ENCODE measurements at regions of chr15 and their contacts with region 1.

Region 1: GRCh38 chr15:45884755-45885445 is 250.1 kb downstream of the SQOR start:
- DNase-seq: no peak
- H3K4me3 ChIP-seq: no peak overlapping the region
- H3K27ac ChIP-seq: no peak overlapping the region
- H3K4me1 ChIP-seq: no peaks in the 10 kb centered on the region
- H3K27me3 ChIP-seq: no peaks in the 10 kb centered on the region
- CTCF ChIP-seq: no peak

Region 2: DNA sequence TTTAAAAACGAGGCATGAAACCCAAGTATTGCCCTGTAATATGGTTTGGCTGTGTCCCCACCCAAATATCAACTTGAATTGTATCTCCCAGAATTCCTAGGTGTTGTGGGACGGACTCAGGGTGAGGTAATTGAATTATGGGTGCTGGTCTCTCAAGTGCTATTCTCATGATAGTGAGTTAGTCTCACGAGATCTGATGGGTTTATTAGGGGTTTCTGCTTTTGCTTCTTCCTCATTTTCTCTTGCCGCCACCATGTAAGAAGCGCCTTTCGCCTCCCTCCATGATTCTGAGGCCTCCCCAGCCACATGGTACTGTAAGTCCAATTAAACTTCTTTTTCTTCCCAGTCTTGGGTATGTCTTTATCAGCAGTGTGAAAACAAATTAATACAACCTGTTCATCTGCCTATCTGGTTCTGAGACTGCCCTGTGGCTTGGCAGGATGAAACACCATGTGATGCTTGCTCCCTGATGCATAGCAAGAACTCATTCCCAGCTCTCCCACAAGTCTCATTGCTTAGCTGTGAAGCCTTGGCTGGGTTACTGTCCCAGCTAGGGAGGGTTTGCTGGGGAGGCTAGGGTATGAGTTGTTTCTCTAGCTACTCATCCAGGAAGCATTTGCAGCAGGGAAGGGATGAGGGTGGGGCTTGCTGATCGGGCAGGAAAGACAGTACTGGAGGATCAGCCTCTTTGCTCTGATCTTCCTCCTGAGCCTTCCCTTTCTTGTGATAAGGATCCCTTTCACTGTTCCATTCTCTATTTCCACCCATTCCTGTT is 253.8 kb before region 1 on chr15:
- CTCF ChIA-PET with region 1: no interaction called
- dilution Hi-C with region 1: no loop called
- in situ Hi-C with region 1: no loop called
- intact Hi-C with region 1: no loop called
- DNase-seq: peak; percentile 90
- H3K4me3 ChIP-seq: peak overlapping the region in 2 of 3 experiments; percentile 13 to 28
- H3K27ac ChIP-seq: peak overlapping the region; percentile 80
- H3K4me1 ChIP-seq: peaks cover 18% of the 10 kb centered on the region
- H3K27me3 ChIP-seq: no peaks in the 10 kb centered on the region
- CTCF ChIP-seq: no peak

Region 3: DNA sequence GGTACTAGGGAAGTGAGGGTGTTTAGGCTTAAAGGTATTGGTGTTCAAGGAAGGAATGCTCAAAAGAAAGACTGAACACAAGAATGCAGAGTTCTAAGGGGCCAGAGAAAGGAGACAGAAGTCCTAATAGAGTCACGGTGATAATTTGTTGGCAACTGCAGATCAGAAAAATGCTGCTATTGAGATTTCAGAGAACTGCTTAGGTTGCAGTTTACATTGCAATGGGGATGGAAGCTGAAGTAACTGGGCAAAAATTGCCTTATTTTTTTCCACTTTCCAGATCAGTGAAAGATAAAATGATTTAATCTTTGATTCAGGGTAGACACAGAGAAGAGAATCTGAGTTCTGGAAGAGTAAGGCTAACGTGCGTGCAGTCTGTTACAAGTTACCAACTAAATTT is 50.3 kb before region 1 on chr15:
- CTCF ChIA-PET with region 1: no interaction called
- dilution Hi-C with region 1: loop called (anchors 5 kb)
- in situ Hi-C with region 1: no loop called
- intact Hi-C with region 1: no loop called
- DNase-seq: no peak
- H3K4me3 ChIP-seq: no peak overlapping the region
- H3K27ac ChIP-seq: no peak overlapping the region
- H3K4me1 ChIP-seq: no peaks in the 10 kb centered on the region
- H3K27me3 ChIP-seq: no peaks in the 10 kb centered on the region
- CTCF ChIP-seq: no peak

Region 4: DNA sequence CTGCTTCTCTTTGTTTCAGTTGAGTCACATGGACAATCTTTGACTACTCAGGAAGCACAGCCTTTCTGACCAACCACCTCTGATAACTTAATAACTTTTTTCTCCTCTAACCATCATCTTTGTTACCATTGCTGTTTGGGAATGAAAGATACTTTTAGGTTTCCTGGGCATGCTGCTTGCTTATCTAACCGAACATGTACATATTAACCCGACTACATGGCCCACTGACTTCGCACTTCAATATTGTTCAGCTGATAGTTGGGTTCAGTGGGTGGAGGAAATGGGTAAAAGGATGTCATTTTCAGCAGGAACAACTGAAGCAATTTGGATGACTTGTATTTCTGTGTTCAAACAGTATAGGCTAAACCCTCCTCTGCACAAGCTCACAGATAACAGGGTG is 35.8 kb before region 1 on chr15:
- CTCF ChIA-PET with region 1: no interaction called
- dilution Hi-C with region 1: no loop called
- in situ Hi-C with region 1: no loop called
- intact Hi-C with region 1: no loop called
- DNase-seq: no peak
- H3K4me3 ChIP-seq: no peak overlapping the region
- H3K27ac ChIP-seq: no peak overlapping the region
- H3K4me1 ChIP-seq: no peaks in the 10 kb centered on the region
- H3K27me3 ChIP-seq: no peaks in the 10 kb centered on the region
- CTCF ChIP-seq: no peak

Measured in mammary epithelial cell (primary cell).